ENCODE measurements at regions of chr15 and their contacts with region 1.

Region 1: DNA sequence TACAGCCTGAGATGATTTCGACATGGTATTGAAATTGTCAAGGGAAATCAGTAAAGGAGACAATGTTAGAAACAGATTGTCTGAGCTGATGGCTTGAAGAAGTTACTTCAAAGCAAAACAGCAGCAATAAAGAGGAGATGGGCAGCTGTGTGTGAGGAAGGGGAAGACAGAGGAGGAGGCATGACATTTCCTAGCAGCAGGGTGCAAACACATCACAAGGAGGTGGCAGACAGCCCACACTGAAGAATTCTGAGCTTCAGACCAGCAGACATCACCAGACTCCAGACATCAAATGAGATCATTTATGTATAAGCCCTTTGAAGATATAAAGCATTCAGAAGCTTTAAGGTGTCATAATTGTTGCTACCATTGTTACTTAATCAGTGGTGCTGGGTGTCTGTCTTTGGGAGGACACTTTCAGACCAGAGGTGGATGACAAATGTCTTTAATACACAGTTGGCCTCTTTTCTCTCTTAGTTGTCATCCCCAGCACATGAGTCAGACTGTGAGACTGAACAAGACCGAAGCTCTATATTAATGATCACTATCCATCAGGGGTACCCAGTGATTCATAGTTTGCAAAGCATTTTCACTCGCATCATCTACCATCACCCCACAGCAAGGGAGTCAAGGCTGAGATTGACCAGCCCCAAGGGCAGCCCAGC is 203.9 kb downstream of the MINAR1 start:
- DNase-seq: no peak
- H3K4me3 ChIP-seq: no peak overlapping the region
- H3K4me3 Mint-ChIP-seq: no peak overlapping the region
- H3K27ac ChIP-seq: no peak overlapping the region
- H3K27ac Mint-ChIP-seq: no peak overlapping the region
- H3K4me1 ChIP-seq: no peaks in the 10 kb centered on the region
- H3K4me1 Mint-ChIP-seq: no peaks in the 10 kb centered on the region
- H3K27me3 ChIP-seq: no peaks in the 10 kb centered on the region
- H3K27me3 Mint-ChIP-seq: peaks cover 14 to 27% of the 10 kb centered on the region in 2 donors

Region 2: GRCh38 chr15:79656151-79657000 is 20.3 kb after region 1 on chr15:
- CTCF ChIA-PET with region 1: no interaction called
- POLR2A ChIA-PET with region 1: no interaction called
- intact Hi-C with region 1: no loop called
- DNase-seq: no peak
- H3K4me3 ChIP-seq: no peak overlapping the region
- H3K4me3 Mint-ChIP-seq: no peak overlapping the region
- H3K27ac ChIP-seq: no peak overlapping the region
- H3K27ac Mint-ChIP-seq: peak overlapping the region in 1 of 7 donors; percentile 39
- H3K4me1 ChIP-seq: no peaks in the 10 kb centered on the region
- H3K4me1 Mint-ChIP-seq: no peaks in the 10 kb centered on the region
- H3K27me3 ChIP-seq: no peaks in the 10 kb centered on the region
- H3K27me3 Mint-ChIP-seq: peaks cover 11 to 21% of the 10 kb centered on the region in 2 donors

Region 3: DNA sequence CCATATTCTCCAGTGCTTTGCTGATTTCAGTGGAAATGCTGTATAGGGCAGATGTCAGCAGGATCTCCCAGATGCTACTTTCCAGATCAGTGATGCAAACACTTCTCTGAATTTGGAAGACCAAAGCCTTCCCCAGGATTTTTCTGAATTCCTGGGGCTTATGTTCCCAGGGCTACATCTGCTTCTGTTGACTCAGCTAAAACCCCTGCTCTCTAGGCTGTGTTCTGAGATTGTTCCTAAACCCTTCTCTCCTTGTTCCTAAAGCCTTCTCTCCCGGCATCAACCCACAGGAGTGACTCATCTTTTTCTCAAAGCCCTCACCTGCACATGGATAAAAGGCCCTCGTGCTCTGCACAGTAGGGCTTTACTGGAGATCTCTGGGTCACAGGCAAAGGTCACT is 552.2 kb after region 1 on chr15:
- CTCF ChIA-PET with region 1: no interaction called
- POLR2A ChIA-PET with region 1: no interaction called
- intact Hi-C with region 1: loop called (anchors 5 kb)
- DNase-seq: no peak
- H3K4me3 ChIP-seq: no peak overlapping the region
- H3K4me3 Mint-ChIP-seq: no peak overlapping the region
- H3K27ac ChIP-seq: no peak overlapping the region
- H3K27ac Mint-ChIP-seq: no peak overlapping the region
- H3K4me1 ChIP-seq: no peaks in the 10 kb centered on the region
- H3K4me1 Mint-ChIP-seq: no peaks in the 10 kb centered on the region
- H3K27me3 ChIP-seq: no peaks in the 10 kb centered on the region
- H3K27me3 Mint-ChIP-seq: no peaks in the 10 kb centered on the region